Dorsolateral prefrontal cortex (tissue), 120 donors: ENCODE measurements at regions of chrX and their contacts with region 1.

Region 1: DNA sequence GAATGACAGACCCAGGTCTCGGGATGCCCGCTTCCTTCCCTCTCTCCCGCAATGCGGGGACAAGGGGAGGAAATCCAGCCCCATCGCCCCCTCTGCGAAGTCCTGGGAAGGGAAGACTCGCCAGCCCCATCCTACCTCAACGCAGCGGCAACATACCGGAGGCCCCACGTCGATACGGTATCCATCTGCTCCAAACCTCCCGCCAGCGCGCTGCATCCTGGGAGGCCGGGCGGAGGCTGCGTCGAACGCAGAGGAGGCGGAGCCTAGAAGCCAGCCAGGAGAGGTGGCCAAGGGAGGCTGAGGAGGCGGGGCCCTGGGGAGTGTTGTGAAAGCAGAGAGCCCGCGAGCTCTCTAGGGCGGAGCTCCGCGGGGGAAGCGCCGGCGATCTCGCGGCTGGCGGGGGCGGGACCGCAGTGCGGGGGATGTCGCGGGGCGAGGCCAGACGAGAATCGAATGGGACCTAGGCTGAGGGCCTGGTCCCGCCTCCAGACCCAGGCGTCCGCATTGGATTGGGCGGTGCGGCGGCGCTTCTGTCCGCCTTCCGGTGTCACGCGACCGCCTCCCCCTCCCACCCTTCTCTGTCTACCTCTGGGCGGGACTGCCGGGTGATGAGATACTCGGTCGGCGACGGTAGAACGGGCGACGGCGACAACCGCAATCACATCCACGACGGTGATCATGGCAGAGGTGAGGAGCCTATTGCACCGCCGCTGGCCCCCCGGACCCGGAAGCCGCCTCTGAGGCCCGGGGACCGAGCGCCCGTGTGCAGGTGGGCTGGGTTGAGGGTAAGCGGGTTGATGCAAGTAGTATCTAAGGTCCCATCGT is at the starts of genes FANCB and MOSPD2:
- DNase-seq: peak; percentile 86 to 95 (median 92)
- H3K4me3 ChIP-seq: peak within 1 kb of the TSS; percentile 46 to 90 (median 74)
- H3K27ac ChIP-seq: peak within 1 kb of the TSS in 56 of 59 donors; percentile 43 to 94 (median 87)
- H3K27me3 ChIP-seq: peaks cover 0 to 13% (median 0%) of the 10 kb centered on the region in 45 donors
- CTCF ChIP-seq: peak in 6 of 56 donors; percentile 9 to 35 (median 16)
- total RNA-seq, gene FANCB: 3.9 to 20.7 (median 7.6) TPM
- total RNA-seq, gene MOSPD2: 10.8 to 64.5 (median 23.6) TPM

Region 2: GRCh38 chrX:14963447-14964236 is 90.6 kb after region 1 on chrX:
- intact Hi-C with region 1: loop called in 1 of 2 experiments (anchors 5 kb)
- DNase-seq: no peak
- H3K4me3 ChIP-seq: no peak overlapping the region
- H3K27ac ChIP-seq: no peak overlapping the region
- H3K27me3 ChIP-seq: peaks cover 0 to 38% (median 2%) of the 10 kb centered on the region in 45 donors
- CTCF ChIP-seq: no peak